ENCODE measurements at regions of chr12 and their contacts with region 1.

Region 1: GRCh38 chr12:3041558-3042164 is 35.5 kb upstream of the TSPAN9 start:
- DNase-seq: peak; percentile 91
- H3K4me3 ChIP-seq: no peak overlapping the region; a peak in 1 of 4 replicates
- H3K27ac ChIP-seq: no peak overlapping the region
- H3K4me1 ChIP-seq: no peaks in the 10 kb centered on the region; a peak in 1 of 4 replicates
- H3K27me3 ChIP-seq: no peaks in the 10 kb centered on the region
- CTCF ChIP-seq: peak; percentile 66
- EP300 ChIP-seq: no peak
- RAD21 ChIP-seq: peak; percentile 75

Region 2: DNA sequence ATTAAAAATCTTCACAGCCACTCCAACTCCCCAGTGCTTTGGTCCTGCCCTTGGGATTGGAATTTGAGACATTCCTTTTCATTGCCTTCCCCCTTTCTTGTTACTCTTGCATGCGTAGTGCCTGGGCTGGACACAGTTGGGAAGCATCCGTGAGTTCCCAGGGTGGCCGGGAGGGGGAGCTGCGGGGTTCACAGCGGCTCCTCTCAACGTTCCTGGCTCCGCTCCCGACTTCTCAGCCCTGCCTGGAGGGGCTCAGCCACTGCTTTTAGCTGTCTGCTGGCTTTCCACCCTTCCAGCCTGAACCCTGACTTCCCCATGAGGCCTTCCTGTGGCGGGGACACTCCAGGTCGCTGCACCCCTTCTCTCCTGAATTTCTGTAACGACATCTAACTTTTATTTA is 188.0 kb before region 1 on chr12:
- CTCF ChIA-PET with region 1: interaction called, 14 read pairs
- POLR2A ChIA-PET with region 1: no interaction called
- DNase-seq: peak; percentile 93
- H3K4me3 ChIP-seq: no peak overlapping the region; a peak in 1 of 4 replicates
- H3K27ac ChIP-seq: no peak overlapping the region
- H3K4me1 ChIP-seq: no peaks in the 10 kb centered on the region
- H3K27me3 ChIP-seq: no peaks in the 10 kb centered on the region
- CTCF ChIP-seq: peak; percentile 89
- EP300 ChIP-seq: no peak
- RAD21 ChIP-seq: peak; percentile 64

Region 3: DNA sequence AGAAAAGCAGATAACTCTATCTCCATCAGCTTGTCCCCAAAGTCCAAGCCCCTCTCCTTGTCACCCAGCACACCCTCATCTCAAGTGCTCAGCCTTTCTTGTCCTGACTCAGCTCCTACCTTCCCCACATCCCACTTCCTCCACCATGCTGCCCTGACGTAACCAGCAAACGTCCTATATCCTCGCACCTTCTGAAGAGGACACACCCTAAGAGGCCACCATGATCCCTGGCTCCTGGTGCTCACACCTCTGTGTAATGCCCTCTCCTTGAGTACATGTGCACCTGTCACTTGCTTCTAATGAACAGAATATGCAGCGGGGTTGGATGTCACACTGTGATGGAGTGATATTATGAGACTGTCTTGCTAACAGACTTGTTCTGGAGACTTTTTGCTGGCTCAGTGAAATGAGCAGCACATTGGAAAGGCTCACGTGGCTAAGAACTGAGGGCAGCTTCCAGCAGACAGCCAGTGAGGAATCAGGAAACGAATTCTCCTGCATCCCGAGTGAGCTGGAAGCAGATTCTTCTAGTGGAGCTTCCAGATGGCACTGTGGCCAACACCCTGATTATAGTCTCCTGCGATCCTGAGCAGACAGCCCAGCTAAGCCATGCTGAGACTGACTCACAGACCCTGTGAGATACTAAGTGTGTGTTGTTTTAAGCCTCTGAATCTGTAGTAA is 19.3 kb after region 1 on chr12:
- CTCF ChIA-PET with region 1: interaction called, 10 read pairs
- POLR2A ChIA-PET with region 1: no interaction called
- DNase-seq: no peak
- H3K4me3 ChIP-seq: no peak overlapping the region
- H3K27ac ChIP-seq: no peak overlapping the region
- H3K4me1 ChIP-seq: no peaks in the 10 kb centered on the region
- H3K27me3 ChIP-seq: no peaks in the 10 kb centered on the region
- CTCF ChIP-seq: no peak
- EP300 ChIP-seq: no peak
- RAD21 ChIP-seq: no peak

Measured in SK-N-SH (cell line).